Head of caudate nucleus (tissue), 42 donors: ENCODE measurements at regions of chr11 and their contacts with region 1.

Region 1: GRCh38 chr11:83292709-83293456 is 6.7 kb upstream of the CCDC90B start:
- DNase-seq: peak in 31 of 42 donors; percentile 20 to 90 (median 66)

Region 2: DNA sequence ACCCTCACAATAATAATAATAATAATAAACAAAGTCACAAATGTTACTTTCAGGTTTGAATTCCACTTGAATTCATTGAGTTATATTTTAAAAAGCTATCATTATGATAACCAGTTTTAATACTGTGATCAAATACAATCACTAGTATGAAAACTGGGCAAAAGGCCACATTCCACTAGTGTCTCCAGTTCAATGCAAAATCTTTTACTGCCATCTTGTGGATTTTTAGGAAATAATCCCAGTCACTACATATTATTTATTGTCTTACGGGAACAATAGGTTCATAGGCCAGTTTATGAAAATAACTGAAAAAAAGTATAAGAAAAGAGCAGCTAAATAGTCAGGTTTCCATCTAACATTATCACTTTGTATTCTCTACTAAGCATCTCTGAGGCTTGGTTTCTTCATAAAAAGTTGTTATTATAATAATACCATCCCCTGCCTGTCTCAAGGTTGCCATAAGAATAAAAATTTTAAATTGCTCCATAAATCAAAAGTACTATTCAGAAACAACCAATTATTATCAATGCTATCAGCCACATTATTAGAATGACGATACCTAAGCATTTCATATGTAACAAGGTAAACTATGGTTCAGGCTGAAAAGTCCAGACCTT is 527.2 kb after region 1 on chr11:
- intact Hi-C with region 1: loop called (anchors 5 kb)
- DNase-seq: peak in 8 of 42 donors; percentile 19 to 69 (median 51)